ENCODE measurements at regions of chr16 and their contacts with region 1.

Region 1: GRCh38 chr16:88803264-88803987 is at the start of gene CDT1:
- DNase-seq: peak; percentile 82
- H3K4me3 Mint-ChIP-seq: peak within 1 kb of the TSS; percentile 79
- H3K27ac Mint-ChIP-seq: peak within 1 kb of the TSS; percentile 91
- H3K4me1 Mint-ChIP-seq: peaks cover 33% of the 10 kb centered on the region
- H3K27me3 Mint-ChIP-seq: no peaks in the 10 kb centered on the region
- total RNA-seq, gene CDT1: 223 to 231 TPM

Region 2: GRCh38 chr16:88700636-88701482 is 102.6 kb before region 1 on chr16:
- CTCF ChIA-PET with region 1: interaction called, 3 read pairs
- intact Hi-C with region 1: loop called (anchors 5 kb)
- DNase-seq: peak; percentile 98
- H3K4me3 Mint-ChIP-seq: peak overlapping the region; percentile 84
- H3K27ac Mint-ChIP-seq: peak overlapping the region; percentile 98
- H3K4me1 Mint-ChIP-seq: peaks cover 71% of the 10 kb centered on the region
- H3K27me3 Mint-ChIP-seq: no peaks in the 10 kb centered on the region

Region 3: DNA sequence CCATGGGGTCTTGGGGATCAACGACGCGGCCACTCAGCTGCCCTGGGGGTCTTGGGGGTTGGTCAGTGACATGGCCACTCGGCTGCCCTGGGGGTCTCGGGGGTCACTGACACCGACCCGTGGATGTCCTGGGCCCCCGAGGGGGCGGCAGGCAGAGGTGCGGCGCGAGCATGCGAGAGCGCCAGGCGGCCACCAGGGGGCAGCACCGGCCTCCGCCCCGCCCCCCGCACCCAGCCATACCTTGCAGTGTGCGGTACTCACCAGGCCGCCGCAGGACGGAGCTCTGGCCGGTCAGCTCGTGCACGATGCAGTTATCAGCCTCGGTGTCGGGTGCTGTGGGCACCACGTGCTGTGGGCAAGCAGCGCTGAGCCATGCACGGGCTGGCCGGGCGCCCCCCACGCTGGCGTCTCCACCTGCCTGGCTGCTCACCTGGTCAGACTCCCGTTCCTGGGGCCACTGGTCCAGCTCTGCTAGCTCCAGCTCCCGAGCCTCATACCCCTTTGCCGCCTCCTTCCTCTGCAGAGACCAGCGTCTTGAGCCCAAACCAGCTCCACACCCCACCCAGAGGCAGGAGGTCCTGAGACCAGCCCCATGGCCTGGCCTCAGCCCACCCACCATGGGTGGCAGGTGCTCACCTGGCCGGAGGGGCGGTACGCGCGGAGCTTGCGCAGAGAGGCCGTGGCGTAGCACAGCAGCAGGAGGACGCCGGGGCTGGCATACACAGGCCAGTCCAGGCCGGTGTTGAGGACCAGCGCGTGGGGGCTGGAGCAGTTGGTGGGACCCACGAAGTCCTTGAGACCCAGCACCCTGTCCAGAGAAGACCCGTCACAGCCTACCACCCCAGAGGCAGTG is 65.9 kb before region 1 on chr16:
- CTCF ChIA-PET with region 1: interaction called, 16 read pairs
- intact Hi-C with region 1: no loop called
- DNase-seq: peak; percentile 79
- H3K4me3 Mint-ChIP-seq: no peak overlapping the region
- H3K27ac Mint-ChIP-seq: no peak overlapping the region
- H3K4me1 Mint-ChIP-seq: peaks cover 3% of the 10 kb centered on the region
- H3K27me3 Mint-ChIP-seq: no peaks in the 10 kb centered on the region

Region 4: DNA sequence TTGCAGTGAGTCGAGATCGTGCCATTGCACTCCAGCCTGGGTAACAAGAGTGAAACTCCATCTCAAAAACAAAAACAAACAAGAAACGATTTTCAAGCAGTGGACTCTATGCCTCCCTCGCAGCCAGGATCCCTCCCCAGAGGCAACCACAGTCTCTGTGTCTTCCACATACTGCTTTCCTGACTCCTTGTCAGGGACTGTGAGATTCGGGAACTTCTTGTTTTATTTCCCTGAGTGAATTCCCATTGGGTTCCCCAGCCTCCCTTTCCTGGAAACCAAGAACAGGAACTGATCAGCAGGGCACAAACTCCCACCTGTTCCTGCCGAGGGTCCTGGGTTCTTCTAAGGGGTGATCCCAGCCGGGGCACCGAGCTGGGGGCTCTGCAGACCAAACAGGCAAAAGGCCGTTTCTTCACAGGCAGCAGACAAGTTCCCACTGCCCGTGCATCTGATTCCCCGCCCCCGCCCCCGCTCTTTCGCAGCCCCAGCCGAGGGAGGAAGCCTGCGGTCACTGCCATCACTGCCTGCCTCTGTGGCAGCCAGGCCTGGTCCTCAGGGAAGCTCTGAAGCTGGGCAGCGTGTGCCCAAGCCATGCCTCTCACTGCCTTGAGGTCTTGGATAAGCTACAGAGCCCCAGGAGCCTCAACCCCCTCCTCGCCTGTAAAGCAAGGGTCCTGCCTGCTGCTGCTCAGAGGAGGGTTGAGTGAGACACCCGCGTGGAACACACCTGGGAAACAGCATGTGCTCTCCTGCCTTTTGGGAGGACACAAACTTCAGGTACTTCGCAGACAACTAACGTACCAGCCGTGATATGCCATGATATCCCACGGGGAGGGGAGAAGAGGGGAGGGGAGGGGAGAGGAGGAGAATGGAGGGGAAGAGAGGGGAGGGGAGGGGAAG is 12.9 kb before region 1 on chr16:
- CTCF ChIA-PET with region 1: interaction called, 3 read pairs
- intact Hi-C with region 1: loop called (anchors 1 kb)
- DNase-seq: peak; percentile 80
- H3K4me3 Mint-ChIP-seq: peak overlapping the region; percentile 66
- H3K27ac Mint-ChIP-seq: peak overlapping the region; percentile 79
- H3K4me1 Mint-ChIP-seq: peaks cover 49% of the 10 kb centered on the region
- H3K27me3 Mint-ChIP-seq: no peaks in the 10 kb centered on the region

Region 5: DNA sequence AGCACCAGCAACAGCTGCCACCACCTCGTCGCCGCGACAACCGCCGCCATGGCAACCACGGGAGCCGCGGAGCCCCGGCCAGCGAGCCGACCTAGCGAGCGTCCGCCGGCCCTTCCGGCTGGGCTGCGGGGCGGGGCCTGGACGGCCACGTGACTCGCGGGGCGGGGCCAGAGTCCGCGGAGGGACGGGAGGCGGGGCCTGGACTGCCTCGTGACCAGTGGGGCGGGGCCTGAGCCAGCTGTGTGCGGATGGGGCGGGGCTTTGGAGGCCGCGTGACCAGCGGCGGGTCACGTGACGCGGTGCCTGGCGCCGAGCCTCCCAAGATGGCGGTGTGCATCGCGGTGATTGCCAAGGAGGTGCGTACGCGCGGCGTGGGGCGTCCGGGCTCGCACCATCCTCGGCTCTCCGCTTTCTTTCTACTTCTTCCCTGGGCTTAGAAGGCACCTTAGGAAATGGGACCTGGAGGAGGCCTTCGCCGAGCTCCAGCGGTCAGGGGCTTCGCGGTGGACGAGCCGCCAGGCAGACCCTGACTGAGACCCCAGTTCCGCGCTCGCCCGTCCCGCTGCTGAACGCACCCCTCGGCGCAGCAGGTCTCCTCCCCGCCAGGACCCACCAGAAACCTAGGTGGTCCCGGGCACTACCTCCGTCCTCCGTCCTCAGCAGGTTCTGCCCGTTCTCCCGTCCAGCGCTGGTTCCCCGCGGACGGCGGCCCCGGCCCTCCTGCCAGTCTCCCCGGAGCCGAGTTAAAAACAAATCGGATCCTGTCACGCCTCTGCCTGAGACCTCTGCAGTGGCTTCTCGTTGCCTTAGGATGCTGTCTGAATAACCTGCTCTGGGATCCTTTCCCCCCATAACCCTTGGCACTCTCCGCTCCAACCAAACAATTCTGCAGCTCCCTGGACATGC is 53.7 kb after region 1 on chr16 and contains the starts of genes GALNS and TRAPPC2L:
- CTCF ChIA-PET with region 1: no interaction called
- intact Hi-C with region 1: loop called (anchors 2 kb)
- DNase-seq: peak; percentile 99
- H3K4me3 Mint-ChIP-seq: peak within 1 kb of the TSS; percentile 88
- H3K27ac Mint-ChIP-seq: peak within 1 kb of the TSS; percentile 63
- H3K4me1 Mint-ChIP-seq: peaks cover 23% of the 10 kb centered on the region
- H3K27me3 Mint-ChIP-seq: no peaks in the 10 kb centered on the region
- total RNA-seq, gene GALNS: 10.9 to 11.2 TPM
- total RNA-seq, gene TRAPPC2L: 57.7 to 66.1 TPM